ENCODE measurements at regions of chr11 and their contacts with region 1.

Region 1: DNA sequence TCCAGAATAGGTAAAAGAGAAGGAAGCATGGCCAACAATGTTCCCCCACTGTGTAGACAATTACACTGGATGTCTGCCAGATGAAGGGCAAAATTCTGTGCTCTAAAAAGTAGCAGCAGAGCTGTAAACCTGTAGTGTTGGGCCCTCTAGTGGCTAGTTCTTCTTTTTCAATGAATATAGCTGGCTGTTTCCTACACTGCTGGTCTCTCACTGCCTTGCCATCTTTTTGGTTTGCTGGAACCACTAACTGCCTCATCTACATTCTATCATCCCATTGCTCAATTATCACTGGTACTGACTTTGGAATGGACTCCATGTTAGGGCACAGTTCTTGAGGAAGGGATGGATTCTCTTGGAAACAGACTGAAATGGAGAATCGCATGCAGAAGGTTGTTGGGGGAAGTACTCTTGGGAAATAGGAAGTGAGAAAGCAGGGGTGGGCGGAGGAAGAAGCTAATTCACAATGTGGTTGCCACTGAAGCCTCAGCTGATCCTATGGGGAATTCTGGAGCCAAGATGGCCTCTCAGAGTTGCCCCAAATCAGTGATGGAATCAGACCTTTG is 17.9 kb downstream of the KCNE3 start:
- DNase-seq: peak; percentile 48 to 75 (median 67)
- H3K4me3 ChIP-seq: no peak overlapping the region
- H3K27ac ChIP-seq: no peak overlapping the region
- H3K4me1 ChIP-seq: no peaks in the 10 kb centered on the region
- H3K27me3 ChIP-seq: no peaks in the 10 kb centered on the region
- CTCF ChIP-seq: peak; percentile 52 to 87 (median 84)
- POLR2A ChIP-seq: no peak

Region 2: DNA sequence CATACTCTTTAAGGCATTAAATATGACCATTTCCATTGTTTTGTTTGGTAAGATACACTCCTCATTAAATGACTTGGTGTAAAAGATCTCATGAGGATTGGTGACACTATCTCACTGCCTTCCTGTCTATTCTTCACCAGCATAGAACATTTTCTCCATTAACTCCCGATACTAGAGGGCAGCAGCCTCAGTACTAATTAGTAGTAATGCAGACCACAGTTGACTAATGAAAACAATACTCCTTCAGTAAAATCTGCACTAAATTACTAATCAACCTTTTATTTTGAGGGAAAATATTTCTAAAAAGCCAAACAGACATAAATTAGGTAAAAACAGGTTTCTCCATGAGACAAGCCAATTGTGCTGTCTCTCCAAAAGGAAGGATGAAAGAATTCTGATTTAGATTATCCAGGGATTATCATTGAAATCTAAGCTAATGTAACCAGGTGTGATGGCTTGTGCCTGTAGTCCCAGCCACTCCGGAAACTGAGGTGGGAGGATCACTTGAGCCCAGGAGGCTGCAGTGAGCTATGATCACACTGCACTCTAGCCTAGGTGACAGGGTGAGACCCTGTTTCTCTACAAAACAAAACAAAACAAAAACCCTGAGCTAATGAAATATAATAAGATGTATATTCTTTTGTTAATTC is 60.6 kb before region 1 on chr11:
- intact Hi-C with region 1: loop called in 1 of 2 experiments (anchors 5 kb)
- DNase-seq: peak; percentile 37 to 81 (median 65)
- H3K4me3 ChIP-seq: no peak overlapping the region
- H3K27ac ChIP-seq: no peak overlapping the region
- H3K4me1 ChIP-seq: no peaks in the 10 kb centered on the region
- H3K27me3 ChIP-seq: no peaks in the 10 kb centered on the region
- CTCF ChIP-seq: peak; percentile 52 to 74 (median 62)
- POLR2A ChIP-seq: no peak

Region 3: GRCh38 chr11:74570266-74571061 is 121.0 kb after region 1 on chr11:
- intact Hi-C with region 1: loop called (anchors 2 to 10 kb)
- DNase-seq: peak; percentile 24 to 73 (median 46)
- H3K4me3 ChIP-seq: no peak overlapping the region
- H3K27ac ChIP-seq: no peak overlapping the region
- H3K4me1 ChIP-seq: no peaks in the 10 kb centered on the region
- H3K27me3 ChIP-seq: no peaks in the 10 kb centered on the region
- CTCF ChIP-seq: peak; percentile 41 to 86 (median 71)
- POLR2A ChIP-seq: no peak